ENCODE measurements at regions of chr16 and their contacts with region 1.

Region 1: GRCh38 chr16:82229796-82230619 is 60.0 kb upstream of the MPHOSPH6 start:
- DNase-seq: peak; percentile 82
- ATAC-seq: no peak
- H3K4me3 Mint-ChIP-seq: no peak overlapping the region
- H3K27ac Mint-ChIP-seq: no peak overlapping the region
- H3K4me1 Mint-ChIP-seq: no peaks in the 10 kb centered on the region
- H3K27me3 Mint-ChIP-seq: peaks cover 16% of the 10 kb centered on the region

Region 2: DNA sequence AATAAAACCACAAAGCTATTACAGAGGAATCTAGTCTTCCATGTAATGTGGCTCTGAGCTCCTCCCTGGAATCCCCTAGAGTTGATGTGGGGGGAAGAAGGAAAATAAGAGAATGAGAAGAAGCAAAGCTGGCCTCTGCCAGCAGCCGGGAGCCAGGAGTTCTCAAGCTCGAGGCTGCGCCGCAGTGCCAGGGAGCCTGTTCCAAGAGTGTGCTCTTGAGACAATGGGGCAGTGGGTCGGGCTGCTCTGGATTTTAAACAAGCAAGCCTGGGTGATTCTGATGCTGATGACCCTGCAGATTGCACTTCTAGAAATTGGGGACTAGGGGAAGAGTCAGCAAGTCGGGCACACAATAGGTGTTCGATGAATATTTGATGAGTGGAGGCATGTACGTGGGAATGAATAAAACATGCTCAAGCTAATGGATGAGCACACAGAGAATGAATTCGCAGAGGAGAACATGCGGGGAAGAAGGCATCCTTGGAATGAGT is 665.5 kb before region 1 on chr16:
- CTCF ChIA-PET with region 1: no interaction called
- POLR2A ChIA-PET with region 1: no interaction called
- intact Hi-C with region 1: no loop called
- DNase-seq: no peak
- ATAC-seq: no peak
- H3K4me3 Mint-ChIP-seq: no peak overlapping the region
- H3K27ac Mint-ChIP-seq: no peak overlapping the region
- H3K4me1 Mint-ChIP-seq: peaks cover 30% of the 10 kb centered on the region
- H3K27me3 Mint-ChIP-seq: no peaks in the 10 kb centered on the region

Region 3: DNA sequence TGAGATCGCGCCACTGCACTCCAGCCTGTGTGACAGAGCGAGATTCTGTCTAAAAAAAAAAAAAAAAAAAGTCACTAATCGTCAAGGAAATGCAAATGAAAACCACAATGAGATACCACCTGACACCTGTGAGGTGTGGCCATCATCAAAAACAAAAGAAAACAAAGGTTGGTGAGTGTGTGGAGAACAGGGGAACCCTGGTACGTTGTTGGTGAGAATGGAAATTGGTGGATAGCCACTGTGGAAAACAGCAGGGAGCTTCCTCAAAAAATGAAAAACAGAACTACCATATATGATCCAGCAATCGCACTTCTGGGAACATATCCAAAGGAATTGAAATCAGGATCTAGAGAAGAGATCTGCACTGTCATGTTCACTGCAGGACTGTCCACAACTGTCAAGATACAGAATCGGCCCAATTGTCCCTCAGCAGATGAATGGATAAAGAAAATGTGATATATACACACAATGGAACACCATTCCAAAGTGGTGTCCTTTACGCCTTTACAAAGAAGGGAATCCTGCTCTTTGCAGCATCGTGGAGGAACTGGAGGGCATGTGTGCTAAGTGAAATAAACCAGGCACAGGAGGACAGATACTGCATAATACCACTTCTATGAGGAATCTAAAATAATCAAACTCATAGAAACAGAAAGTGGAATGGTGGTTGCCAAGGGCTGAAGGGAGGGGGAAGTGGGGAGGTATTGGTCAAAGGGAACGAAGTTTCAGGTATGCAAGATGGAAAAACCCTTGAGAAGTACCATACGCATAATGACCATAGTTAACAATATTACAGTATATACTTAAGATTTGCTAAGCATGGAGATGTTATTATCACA is 514.4 kb before region 1 on chr16:
- CTCF ChIA-PET with region 1: no interaction called
- POLR2A ChIA-PET with region 1: no interaction called
- intact Hi-C with region 1: no loop called
- DNase-seq: no peak
- ATAC-seq: peak; percentile 33
- H3K4me3 Mint-ChIP-seq: no peak overlapping the region
- H3K27ac Mint-ChIP-seq: peak overlapping the region; percentile 74
- H3K4me1 Mint-ChIP-seq: peaks cover 47% of the 10 kb centered on the region
- H3K27me3 Mint-ChIP-seq: no peaks in the 10 kb centered on the region

Region 4: GRCh38 chr16:81885976-81886586 is 343.9 kb before region 1 on chr16:
- CTCF ChIA-PET with region 1: interaction called, 8 read pairs
- POLR2A ChIA-PET with region 1: no interaction called
- intact Hi-C with region 1: loop called (anchors 1 kb)
- DNase-seq: peak; percentile 42
- ATAC-seq: peak; percentile 71
- H3K4me3 Mint-ChIP-seq: no peak overlapping the region
- H3K27ac Mint-ChIP-seq: no peak overlapping the region
- H3K4me1 Mint-ChIP-seq: no peaks in the 10 kb centered on the region
- H3K27me3 Mint-ChIP-seq: no peaks in the 10 kb centered on the region

Region 5: DNA sequence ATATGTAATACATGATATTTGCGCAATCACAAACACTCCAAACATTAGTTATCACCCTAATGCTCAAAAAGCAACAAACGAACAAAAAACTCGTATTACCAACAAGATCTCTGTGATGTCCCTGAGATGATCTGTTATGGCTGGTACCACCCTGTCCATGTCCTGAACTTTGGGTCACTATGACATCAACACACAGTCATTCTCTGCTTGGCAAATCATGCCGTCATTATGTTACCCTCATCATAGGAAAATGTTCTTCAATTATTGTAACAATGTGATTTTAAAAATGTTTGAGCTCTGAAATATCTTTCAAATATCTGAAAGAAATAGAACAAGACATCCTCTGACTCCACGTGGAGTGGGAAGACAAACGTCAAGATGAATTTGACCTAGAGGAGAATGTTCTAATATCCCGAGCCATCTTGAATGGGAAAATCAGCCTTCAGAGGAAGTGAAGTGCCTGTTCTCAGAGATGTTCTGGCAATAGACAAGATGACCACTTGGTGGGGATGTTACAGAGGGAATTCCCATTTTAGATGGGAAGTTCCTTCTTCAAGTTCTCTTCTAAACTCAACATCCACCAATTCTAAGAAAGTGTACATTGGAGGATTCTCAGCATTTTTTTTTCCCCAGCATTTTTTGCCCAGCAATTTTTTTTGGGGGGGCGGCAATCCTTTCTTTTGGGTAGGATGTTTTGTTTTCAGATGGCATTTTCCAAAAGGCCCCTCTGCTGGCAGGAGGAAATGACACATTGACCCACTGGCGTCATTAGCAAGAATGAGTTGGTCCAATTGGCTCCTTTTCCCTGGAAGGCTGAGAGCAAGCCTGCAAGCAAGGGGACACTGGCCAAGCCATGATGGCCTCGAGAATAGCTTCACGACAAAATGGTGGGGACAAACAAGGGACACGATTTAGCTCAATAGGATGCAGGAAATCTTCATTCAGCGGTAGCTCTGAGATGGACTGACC is 198.6 kb before region 1 on chr16:
- CTCF ChIA-PET with region 1: interaction called, 11 read pairs
- POLR2A ChIA-PET with region 1: no interaction called
- intact Hi-C with region 1: loop called (anchors 1 kb)
- DNase-seq: no peak
- ATAC-seq: no peak
- H3K4me3 Mint-ChIP-seq: no peak overlapping the region
- H3K27ac Mint-ChIP-seq: no peak overlapping the region
- H3K4me1 Mint-ChIP-seq: no peaks in the 10 kb centered on the region
- H3K27me3 Mint-ChIP-seq: peaks cover 15% of the 10 kb centered on the region

Region 6: GRCh38 chr16:82124651-82125050 is 105.4 kb before region 1 on chr16:
- CTCF ChIA-PET with region 1: no interaction called
- POLR2A ChIA-PET with region 1: no interaction called
- intact Hi-C with region 1: no loop called
- DNase-seq: no peak
- ATAC-seq: no peak
- H3K4me3 Mint-ChIP-seq: no peak overlapping the region
- H3K27ac Mint-ChIP-seq: no peak overlapping the region
- H3K4me1 Mint-ChIP-seq: no peaks in the 10 kb centered on the region
- H3K27me3 Mint-ChIP-seq: peaks cover 4% of the 10 kb centered on the region

Region 7: DNA sequence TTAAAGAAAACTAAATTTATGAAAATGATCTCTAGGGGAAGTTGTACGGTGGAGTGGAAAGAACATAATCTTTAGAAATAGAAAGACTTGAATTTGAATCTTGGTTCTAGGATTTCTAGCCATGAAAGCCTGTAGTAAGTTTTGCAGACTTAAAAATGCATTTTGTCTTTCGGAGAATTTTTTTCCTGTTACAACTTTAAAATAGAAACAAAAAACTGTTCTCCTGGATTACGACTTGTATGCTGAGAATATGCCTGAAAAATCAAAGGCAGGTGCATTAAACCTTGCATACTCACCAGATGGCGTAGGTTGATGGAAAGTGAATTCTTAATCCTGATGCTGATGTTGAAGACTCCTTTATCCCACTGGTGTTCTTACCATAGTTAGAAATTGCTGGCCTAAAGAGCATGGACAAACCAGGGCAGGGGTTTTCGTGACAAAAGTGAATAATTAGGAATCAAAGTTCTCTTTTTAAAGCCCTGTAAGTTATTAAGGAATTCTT is 52.4 kb before region 1 on chr16:
- CTCF ChIA-PET with region 1: interaction called, 4 read pairs
- POLR2A ChIA-PET with region 1: no interaction called
- intact Hi-C with region 1: loop called in 1 of 2 experiments (anchors 5 kb)
- DNase-seq: no peak
- ATAC-seq: no peak
- H3K4me3 Mint-ChIP-seq: no peak overlapping the region
- H3K27ac Mint-ChIP-seq: no peak overlapping the region
- H3K4me1 Mint-ChIP-seq: no peaks in the 10 kb centered on the region
- H3K27me3 Mint-ChIP-seq: peaks cover 35% of the 10 kb centered on the region

Region 8: GRCh38 chr16:82263521-82264143 is 33.6 kb after region 1 on chr16:
- CTCF ChIA-PET with region 1: interaction called, 10 read pairs
- POLR2A ChIA-PET with region 1: no interaction called
- intact Hi-C with region 1: no loop called
- DNase-seq: peak; percentile 69
- ATAC-seq: peak; percentile 80
- H3K4me3 Mint-ChIP-seq: no peak overlapping the region
- H3K27ac Mint-ChIP-seq: no peak overlapping the region
- H3K4me1 Mint-ChIP-seq: no peaks in the 10 kb centered on the region
- H3K27me3 Mint-ChIP-seq: peaks cover 32% of the 10 kb centered on the region